ENCODE measurements at regions of chr6 and their contacts with region 1.

Region 1: GRCh38 chr6:14210663-14211561 is 93.3 kb downstream of the CD83 start:
- DNase-seq: peak; percentile 96 to 97 (median 96)
- ATAC-seq: peak; percentile 90 to 97 (median 95)
- H3K4me3 ChIP-seq: peak overlapping the region; percentile 53 to 90 (median 78)
- H3K27ac ChIP-seq: peak overlapping the region; percentile 82 to 95 (median 88)
- H3K4me1 ChIP-seq: peaks cover 0 to 23% (median 15%) of the 10 kb centered on the region in 12 donors
- H3K27me3 ChIP-seq: no peaks in the 10 kb centered on the region
- CTCF ChIP-seq: peak; percentile 28 to 98 (median 72)
- POLR2A ChIP-seq: peak in 1 of 2 donors; percentile 69

Region 2: GRCh38 chr6:14144678-14145113 is 66.2 kb before region 1 on chr6:
- intact Hi-C with region 1: no loop called
- DNase-seq: peak; percentile 57 to 78 (median 65)
- ATAC-seq: peak in 3 of 4 donors; percentile 81 to 84 (median 83)
- H3K4me3 ChIP-seq: no peak overlapping the region
- H3K27ac ChIP-seq: no peak overlapping the region
- H3K4me1 ChIP-seq: peaks cover 0 to 9% (median 0%) of the 10 kb centered on the region in 12 donors
- H3K27me3 ChIP-seq: no peaks in the 10 kb centered on the region
- CTCF ChIP-seq: peak; percentile 82 to 98 (median 91)
- POLR2A ChIP-seq: no peak

Region 3: GRCh38 chr6:14423330-14423729 is 212.4 kb after region 1 on chr6:
- intact Hi-C with region 1: loop called in 1 of 10 experiments (anchors 10 kb)
- DNase-seq: peak in 4 of 5 donors; percentile 51 to 74 (median 55)
- ATAC-seq: peak; percentile 89 to 97 (median 92)
- H3K4me3 ChIP-seq: no peak overlapping the region
- H3K27ac ChIP-seq: peak overlapping the region in 9 of 12 donors; percentile 29 to 73 (median 51)
- H3K4me1 ChIP-seq: peaks cover 0 to 20% (median 6%) of the 10 kb centered on the region in 12 donors
- H3K27me3 ChIP-seq: no peaks in the 10 kb centered on the region
- CTCF ChIP-seq: no peak
- POLR2A ChIP-seq: no peak

Region 4: GRCh38 chr6:14638906-14639761 is 428.2 kb after region 1 on chr6:
- intact Hi-C with region 1: loop called in 5 of 10 experiments (anchors 1 to 10 kb)
- DNase-seq: peak; percentile 73 to 81 (median 77)
- ATAC-seq: peak; percentile 90 to 95 (median 93)
- H3K4me3 ChIP-seq: peak overlapping the region in 9 of 12 donors; percentile 24 to 49 (median 37)
- H3K27ac ChIP-seq: peak overlapping the region; percentile 66 to 90 (median 86)
- H3K4me1 ChIP-seq: peaks cover 4 to 50% (median 24%) of the 10 kb centered on the region in 12 donors
- H3K27me3 ChIP-seq: no peaks in the 10 kb centered on the region
- CTCF ChIP-seq: peak in 3 of 12 donors; percentile 7 to 27 (median 15)
- POLR2A ChIP-seq: no peak

Region 5: DNA sequence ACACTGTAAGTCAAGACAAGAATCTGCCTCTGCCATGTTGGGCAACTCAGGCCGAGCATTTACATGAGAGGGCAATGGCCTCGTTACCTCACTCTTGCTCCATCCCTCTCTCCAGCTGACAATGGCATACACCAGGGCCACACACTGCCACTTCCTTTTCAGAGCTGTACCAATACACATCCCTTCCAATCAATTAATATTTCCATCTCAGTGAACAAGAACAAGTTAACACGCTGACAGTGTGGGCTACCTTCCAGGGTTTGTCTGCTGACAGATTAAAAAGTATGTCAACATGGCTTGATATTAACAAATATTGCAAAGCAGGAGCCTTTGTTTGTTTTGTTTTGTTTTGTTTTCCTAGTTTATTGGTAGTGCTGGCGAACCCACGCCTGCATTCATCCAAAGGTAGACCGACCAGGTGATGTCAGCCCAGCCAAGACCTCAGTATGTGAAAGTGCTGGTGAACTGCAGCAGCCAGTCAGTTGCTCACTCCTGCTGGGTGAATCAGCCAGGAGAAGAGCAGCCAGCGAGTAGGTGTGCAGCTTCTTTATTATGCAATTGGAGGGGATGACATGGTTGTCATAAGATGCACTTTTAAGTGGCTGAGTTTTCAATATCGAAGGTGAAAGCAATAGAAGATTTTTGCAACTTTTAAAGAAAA is 547.6 kb after region 1 on chr6:
- intact Hi-C with region 1: no loop called
- DNase-seq: no peak
- ATAC-seq: no peak
- H3K4me3 ChIP-seq: no peak overlapping the region
- H3K27ac ChIP-seq: no peak overlapping the region
- H3K4me1 ChIP-seq: peaks cover 0 to 19% (median 0%) of the 10 kb centered on the region in 12 donors
- H3K27me3 ChIP-seq: no peaks in the 10 kb centered on the region
- CTCF ChIP-seq: no peak
- POLR2A ChIP-seq: no peak

Region 6: GRCh38 chr6:14799928-14800327 is 589.0 kb after region 1 on chr6:
- intact Hi-C with region 1: loop called in 1 of 10 experiments (anchors 1 kb)
- DNase-seq: peak in 4 of 5 donors; percentile 75 to 83 (median 78)
- ATAC-seq: peak; percentile 91 to 96 (median 92)
- H3K4me3 ChIP-seq: no peak overlapping the region
- H3K27ac ChIP-seq: peak overlapping the region in 6 of 12 donors; percentile 2 to 43 (median 20)
- H3K4me1 ChIP-seq: peaks cover 0 to 23% (median 14%) of the 10 kb centered on the region in 12 donors
- H3K27me3 ChIP-seq: no peaks in the 10 kb centered on the region
- CTCF ChIP-seq: no peak
- POLR2A ChIP-seq: no peak

Region 7: GRCh38 chr6:15389765-15390723 is 1179.1 kb after region 1 on chr6:
- intact Hi-C with region 1: loop called in 4 of 10 experiments (anchors 5 to 10 kb)
- DNase-seq: no peak
- ATAC-seq: peak; percentile 4 to 60 (median 53)
- H3K4me3 ChIP-seq: peak overlapping the region in 1 of 12 donors; percentile 0
- H3K27ac ChIP-seq: peak overlapping the region in 10 of 12 donors; percentile 1 to 70 (median 43)
- H3K4me1 ChIP-seq: peaks cover 0 to 68% (median 44%) of the 10 kb centered on the region in 12 donors
- H3K27me3 ChIP-seq: no peaks in the 10 kb centered on the region
- CTCF ChIP-seq: peak; percentile 42 to 78 (median 64)
- POLR2A ChIP-seq: no peak

Region 8: GRCh38 chr6:15504581-15505350 is 1293.9 kb after region 1 on chr6:
- intact Hi-C with region 1: loop called in 5 of 10 experiments (anchors 5 to 10 kb)
- DNase-seq: peak; percentile 75 to 81 (median 78)
- ATAC-seq: peak; percentile 72 to 87 (median 78)
- H3K4me3 ChIP-seq: peak overlapping the region in 10 of 12 donors; percentile 10 to 50 (median 33)
- H3K27ac ChIP-seq: peak overlapping the region; percentile 67 to 89 (median 79)
- H3K4me1 ChIP-seq: peaks cover 0 to 56% (median 43%) of the 10 kb centered on the region in 12 donors
- H3K27me3 ChIP-seq: no peaks in the 10 kb centered on the region
- CTCF ChIP-seq: no peak
- POLR2A ChIP-seq: no peak